Mammary epithelial cell (primary cell): ENCODE measurements at regions of chr22 and their contacts with region 1.

Region 1: GRCh38 chr22:39405346-39406085 is 5.9 kb downstream of the TAB1 start:
- DNase-seq: no peak
- H3K4me3 ChIP-seq: no peak overlapping the region
- H3K27ac ChIP-seq: no peak overlapping the region
- H3K4me1 ChIP-seq: peaks cover 5% of the 10 kb centered on the region
- H3K27me3 ChIP-seq: no peaks in the 10 kb centered on the region
- CTCF ChIP-seq: no peak

Region 2: DNA sequence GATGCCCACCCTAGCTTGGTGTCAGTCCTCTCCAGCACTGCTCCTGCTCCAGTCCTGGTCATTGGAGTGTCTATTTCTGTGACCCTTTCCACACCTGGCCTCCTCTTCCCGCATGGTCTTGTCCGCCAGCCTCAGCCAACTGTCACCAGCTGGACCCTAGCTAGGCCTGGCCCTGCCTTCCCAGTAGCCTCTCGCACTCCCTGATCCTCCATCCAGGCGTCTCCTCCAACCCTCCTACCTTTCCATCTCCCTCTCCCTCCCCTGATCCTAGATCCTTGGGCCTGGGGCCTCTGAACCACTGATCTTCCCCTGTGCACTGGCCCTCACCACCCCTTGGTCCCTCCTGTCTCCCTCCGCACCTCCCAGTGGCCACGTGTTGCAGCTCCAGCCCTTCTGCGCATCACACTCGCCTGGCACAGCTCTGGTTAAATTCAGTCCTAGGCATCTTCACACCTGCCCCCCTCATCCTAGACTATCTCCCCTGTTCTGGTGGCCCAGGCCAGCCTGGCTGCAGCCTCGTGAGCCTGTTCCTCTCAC is 45.8 kb before region 1 on chr22:
- CTCF ChIA-PET with region 1: interaction called, 19 read pairs
- dilution Hi-C with region 1: no loop called
- in situ Hi-C with region 1: no loop called
- intact Hi-C with region 1: no loop called
- DNase-seq: no peak
- H3K4me3 ChIP-seq: no peak overlapping the region
- H3K27ac ChIP-seq: no peak overlapping the region
- H3K4me1 ChIP-seq: peaks cover 6% of the 10 kb centered on the region
- H3K27me3 ChIP-seq: no peaks in the 10 kb centered on the region
- CTCF ChIP-seq: no peak

Region 3: GRCh38 chr22:39471381-39472141 is 66.0 kb after region 1 on chr22:
- CTCF ChIA-PET with region 1: no interaction called
- dilution Hi-C with region 1: loop called (anchors 10 kb)
- in situ Hi-C with region 1: no loop called
- intact Hi-C with region 1: no loop called
- DNase-seq: peak; percentile 21
- H3K4me3 ChIP-seq: no peak overlapping the region
- H3K27ac ChIP-seq: no peak overlapping the region
- H3K4me1 ChIP-seq: peaks cover 7% of the 10 kb centered on the region
- H3K27me3 ChIP-seq: no peaks in the 10 kb centered on the region
- CTCF ChIP-seq: no peak